ENCODE measurements at regions of chr5 and their contacts with region 1.

Region 1: GRCh38 chr5:149357370-149358293 is at the start of gene PCYOX1L:
- DNase-seq: peak; percentile 95
- H3K4me3 Mint-ChIP-seq: peak within 1 kb of the TSS; percentile 90
- H3K27ac Mint-ChIP-seq: peak within 1 kb of the TSS; percentile 89
- H3K4me1 Mint-ChIP-seq: peaks cover 64% of the 10 kb centered on the region
- H3K27me3 Mint-ChIP-seq: no peaks in the 10 kb centered on the region
- total RNA-seq, gene PCYOX1L: 21.8 to 24.0 TPM

Region 2: GRCh38 chr5:149002053-149002452 is 355.6 kb before region 1 on chr5:
- CTCF ChIA-PET with region 1: no interaction called
- POLR2A ChIA-PET with region 1: no interaction called
- intact Hi-C with region 1: no loop called
- DNase-seq: no peak
- H3K4me3 Mint-ChIP-seq: no peak overlapping the region
- H3K27ac Mint-ChIP-seq: no peak overlapping the region
- H3K4me1 Mint-ChIP-seq: no peaks in the 10 kb centered on the region
- H3K27me3 Mint-ChIP-seq: peaks cover 8% of the 10 kb centered on the region

Region 3: GRCh38 chr5:150758531-150759333 is 1401.1 kb after region 1 on chr5 and contains the start of gene DCTN4:
- CTCF ChIA-PET with region 1: no interaction called
- POLR2A ChIA-PET with region 1: no interaction called
- intact Hi-C with region 1: loop called (anchors 5 kb)
- DNase-seq: peak; percentile 96
- H3K4me3 Mint-ChIP-seq: no peak within 1 kb of the TSS
- H3K27ac Mint-ChIP-seq: no peak within 1 kb of the TSS
- H3K4me1 Mint-ChIP-seq: peaks cover 29% of the 10 kb centered on the region
- H3K27me3 Mint-ChIP-seq: peaks cover 2% of the 10 kb centered on the region
- total RNA-seq, gene DCTN4: 32.2 to 32.9 TPM

Measured in activated CD4-positive, alpha-beta memory T cell treated with anti-CD3 and anti-CD28 coated beads for 36 hours (primary cell).